Common myeloid progenitor, CD34-positive (primary cell): ENCODE measurements at regions of chr1 and their contacts with region 1.

Region 1: GRCh38 chr1:150760013-150760412 is 5.6 kb downstream of the CTSS start:
- DNase-seq: peak; percentile 36 to 70 (median 63)
- H3K4me3 ChIP-seq: peak overlapping the region in 1 of 7 experiments; percentile 25
- H3K27ac ChIP-seq: no peak overlapping the region
- H3K4me1 ChIP-seq: peaks cover 10 to 30% (median 16%) of the 10 kb centered on the region in 4 experiments
- H3K27me3 ChIP-seq: no peaks in the 10 kb centered on the region

Region 2: GRCh38 chr1:150813058-150813707 is 53.2 kb after region 1 on chr1:
- CTCF ChIA-PET with region 1: interaction called, 11 read pairs
- POLR2A ChIA-PET with region 1: no interaction called
- DNase-seq: peak; percentile 39 to 67 (median 60)
- H3K4me3 ChIP-seq: no peak overlapping the region
- H3K27ac ChIP-seq: no peak overlapping the region
- H3K4me1 ChIP-seq: peaks cover 0 to 2% (median under 1%) of the 10 kb centered on the region in 4 experiments
- H3K27me3 ChIP-seq: no peaks in the 10 kb centered on the region